Activated naive CD4-positive, alpha-beta T cell treated with anti-CD3 and anti-CD28 coated beads for 36 hours (primary cell): ENCODE measurements at regions of chr11 and their contacts with region 1.

Region 1: GRCh38 chr11:73521621-73522020 is 76.3 kb downstream of the FAM168A start:
- DNase-seq: peak; percentile 64
- H3K4me3 Mint-ChIP-seq: peak overlapping the region; percentile 28
- H3K27ac Mint-ChIP-seq: peak overlapping the region; percentile 88
- H3K4me1 Mint-ChIP-seq: peaks cover 35% of the 10 kb centered on the region
- H3K27me3 Mint-ChIP-seq: no peaks in the 10 kb centered on the region

Region 2: DNA sequence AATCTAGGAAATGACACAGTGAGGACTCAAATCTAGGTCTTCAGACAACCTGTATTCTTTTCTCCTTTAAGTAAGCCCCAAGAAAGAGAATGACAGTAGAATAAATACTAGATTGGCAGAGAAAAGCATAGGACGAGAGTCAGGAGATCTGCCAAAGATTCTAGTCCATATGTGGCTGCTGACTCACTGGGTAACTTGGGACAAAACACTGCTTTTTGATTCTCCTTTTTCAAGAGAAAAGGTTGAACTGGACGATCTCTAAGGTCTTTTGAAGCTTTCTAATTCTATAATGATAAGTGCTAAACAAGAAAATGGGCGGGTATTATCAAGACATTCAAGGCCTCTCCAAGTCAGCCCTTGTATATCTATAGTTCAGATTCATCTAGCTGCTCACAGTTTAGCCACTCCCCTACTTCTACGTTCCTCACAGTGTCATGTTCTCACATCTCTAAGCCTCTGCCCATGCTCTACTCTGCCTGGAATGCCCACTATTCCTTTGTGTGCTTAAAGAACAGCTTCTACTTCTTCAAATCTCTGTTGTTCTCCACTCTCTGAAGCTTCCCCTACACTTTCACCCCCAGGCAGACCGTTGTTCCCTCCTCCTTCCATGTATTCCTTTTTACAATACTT is 92.4 kb before region 1 on chr11:
- CTCF ChIA-PET with region 1: no interaction called
- intact Hi-C with region 1: loop called (anchors 5 kb)
- DNase-seq: no peak
- H3K4me3 Mint-ChIP-seq: no peak overlapping the region
- H3K27ac Mint-ChIP-seq: no peak overlapping the region
- H3K4me1 Mint-ChIP-seq: peaks cover 9% of the 10 kb centered on the region
- H3K27me3 Mint-ChIP-seq: no peaks in the 10 kb centered on the region

Region 3: DNA sequence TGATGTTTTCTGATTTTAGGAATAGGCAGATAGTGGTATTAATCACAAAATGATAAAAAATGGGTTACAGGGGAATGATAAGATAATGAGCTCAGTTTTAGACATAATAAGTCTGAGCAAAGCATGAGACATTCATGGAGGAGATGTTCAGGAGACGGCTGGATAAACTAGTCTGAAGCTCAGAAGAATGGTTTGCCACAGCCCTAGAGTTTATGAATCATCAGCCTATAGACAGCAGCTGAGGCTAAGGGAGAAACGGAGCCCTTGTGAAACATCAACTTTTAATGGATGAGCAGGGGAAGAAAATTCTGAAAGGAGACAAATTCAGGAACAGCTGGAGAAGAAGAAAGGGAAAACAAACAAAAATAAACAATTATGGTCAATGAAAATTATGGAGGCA is 58.3 kb before region 1 on chr11:
- CTCF ChIA-PET with region 1: no interaction called
- intact Hi-C with region 1: no loop called
- DNase-seq: no peak
- H3K4me3 Mint-ChIP-seq: no peak overlapping the region
- H3K27ac Mint-ChIP-seq: no peak overlapping the region
- H3K4me1 Mint-ChIP-seq: no peaks in the 10 kb centered on the region
- H3K27me3 Mint-ChIP-seq: no peaks in the 10 kb centered on the region

Region 4: GRCh38 chr11:73538381-73538872 is 16.8 kb after region 1 on chr11:
- CTCF ChIA-PET with region 1: interaction called, 3 read pairs
- intact Hi-C with region 1: loop called (anchors 1 kb)
- DNase-seq: peak; percentile 52
- H3K4me3 Mint-ChIP-seq: no peak overlapping the region
- H3K27ac Mint-ChIP-seq: peak overlapping the region; percentile 59
- H3K4me1 Mint-ChIP-seq: peaks cover 30% of the 10 kb centered on the region
- H3K27me3 Mint-ChIP-seq: no peaks in the 10 kb centered on the region

Region 5: DNA sequence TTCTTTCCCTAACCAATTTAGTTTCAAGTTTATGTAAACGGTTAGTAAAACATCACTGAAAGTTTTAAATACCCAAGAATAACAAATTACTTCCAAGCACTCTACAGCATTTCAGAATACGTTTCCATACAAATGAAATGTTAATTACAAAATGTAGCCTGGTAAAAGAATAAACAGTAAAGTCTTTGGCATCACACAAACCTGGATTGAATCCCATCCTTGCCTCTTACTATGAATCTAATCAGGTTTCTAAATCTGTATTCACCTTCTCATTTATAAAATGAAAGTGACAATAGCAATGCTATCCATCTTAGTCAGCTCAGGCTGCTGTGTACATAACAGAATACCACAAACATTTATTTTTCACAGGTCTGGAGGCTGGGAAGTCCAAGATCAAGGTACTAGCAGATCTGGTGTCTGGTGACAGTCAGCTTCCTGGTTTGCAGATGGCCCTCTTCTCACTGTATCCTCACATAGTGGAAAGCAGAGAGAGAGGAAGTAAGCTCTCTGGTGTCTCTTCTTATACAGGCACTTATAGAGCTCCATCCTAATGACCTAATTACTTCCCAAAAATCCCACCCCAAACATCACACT is 57.1 kb after region 1 on chr11:
- CTCF ChIA-PET with region 1: interaction called, 3 read pairs
- intact Hi-C with region 1: loop called (anchors 1 kb)
- DNase-seq: peak; percentile 52
- H3K4me3 Mint-ChIP-seq: no peak overlapping the region
- H3K27ac Mint-ChIP-seq: peak overlapping the region; percentile 24
- H3K4me1 Mint-ChIP-seq: peaks cover 35% of the 10 kb centered on the region
- H3K27me3 Mint-ChIP-seq: no peaks in the 10 kb centered on the region